Mammary epithelial cell (primary cell): ENCODE measurements at regions of chr10 and their contacts with region 1.

Region 1: GRCh38 chr10:36634916-36635315 is 490.5 kb upstream of the ANKRD30A start:
- DNase-seq: no peak
- H3K4me3 ChIP-seq: no peak overlapping the region
- H3K27ac ChIP-seq: no peak overlapping the region
- H3K4me1 ChIP-seq: no peaks in the 10 kb centered on the region
- H3K27me3 ChIP-seq: no peaks in the 10 kb centered on the region
- CTCF ChIP-seq: no peak

Region 2: DNA sequence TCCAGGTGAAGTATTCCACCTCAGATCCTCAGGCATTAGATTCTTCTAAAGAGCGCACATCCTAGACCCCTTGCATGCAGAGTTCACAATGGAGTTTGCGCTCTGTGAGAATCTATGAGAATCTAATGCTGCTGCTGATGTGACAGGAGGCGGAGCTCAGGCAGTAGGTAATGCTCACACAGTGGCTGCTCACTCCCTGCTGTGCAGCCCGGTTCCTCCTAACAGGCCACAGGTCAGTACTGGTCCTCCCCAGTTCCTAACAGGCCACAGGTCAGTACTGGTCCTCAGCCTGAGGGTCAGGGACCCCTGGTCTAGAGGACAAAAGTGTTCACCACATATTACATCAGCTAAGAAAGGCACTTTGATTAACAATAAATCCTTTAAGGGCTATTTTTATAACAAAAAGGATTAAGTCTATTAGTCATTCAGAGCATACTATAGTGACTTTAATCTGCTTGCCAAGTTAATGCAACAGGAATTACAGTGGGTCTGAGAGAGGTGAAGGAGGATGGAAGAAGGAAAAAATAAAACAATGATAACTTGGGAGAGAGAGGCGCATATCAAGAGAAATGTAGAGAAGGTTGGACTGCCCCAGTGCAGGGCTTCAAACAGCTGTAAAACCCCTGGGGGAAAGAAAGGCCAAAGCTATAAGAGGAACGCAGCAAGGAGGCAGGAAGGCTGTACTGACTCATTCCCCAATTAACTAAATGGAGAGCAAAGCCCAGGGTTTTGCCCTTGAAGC is 1594.0 kb before region 1 on chr10:
- CTCF ChIA-PET with region 1: interaction called, 12 read pairs
- dilution Hi-C with region 1: no loop called
- in situ Hi-C with region 1: no loop called
- intact Hi-C with region 1: no loop called
- DNase-seq: peak; percentile 46
- H3K4me3 ChIP-seq: no peak overlapping the region
- H3K27ac ChIP-seq: peak overlapping the region; percentile 5
- H3K4me1 ChIP-seq: peaks cover 20% of the 10 kb centered on the region
- H3K27me3 ChIP-seq: no peaks in the 10 kb centered on the region
- CTCF ChIP-seq: no peak

Region 3: DNA sequence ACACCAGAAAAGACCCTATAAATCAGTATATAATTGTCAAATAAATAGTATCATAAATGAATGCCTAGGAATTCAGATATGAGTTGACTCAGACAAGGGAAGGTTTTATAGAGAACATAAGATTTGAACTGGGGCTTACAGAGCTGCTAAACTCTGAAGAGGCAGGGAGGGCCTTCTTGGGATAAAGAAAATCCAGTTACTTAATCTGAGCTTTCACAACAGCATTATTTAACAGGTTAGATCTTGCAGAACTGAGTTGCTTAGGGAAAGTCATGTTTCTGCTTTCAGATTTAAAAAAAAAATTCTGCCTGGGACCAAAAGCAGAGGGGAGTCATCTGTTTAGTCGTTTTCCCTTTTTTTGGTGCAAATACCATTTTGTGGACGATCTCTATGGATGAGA is 398.0 kb before region 1 on chr10:
- CTCF ChIA-PET with region 1: no interaction called
- dilution Hi-C with region 1: no loop called
- in situ Hi-C with region 1: no loop called
- intact Hi-C with region 1: no loop called
- DNase-seq: peak; percentile 28
- H3K4me3 ChIP-seq: no peak overlapping the region
- H3K27ac ChIP-seq: no peak overlapping the region
- H3K4me1 ChIP-seq: no peaks in the 10 kb centered on the region
- H3K27me3 ChIP-seq: no peaks in the 10 kb centered on the region
- CTCF ChIP-seq: no peak

Region 4: DNA sequence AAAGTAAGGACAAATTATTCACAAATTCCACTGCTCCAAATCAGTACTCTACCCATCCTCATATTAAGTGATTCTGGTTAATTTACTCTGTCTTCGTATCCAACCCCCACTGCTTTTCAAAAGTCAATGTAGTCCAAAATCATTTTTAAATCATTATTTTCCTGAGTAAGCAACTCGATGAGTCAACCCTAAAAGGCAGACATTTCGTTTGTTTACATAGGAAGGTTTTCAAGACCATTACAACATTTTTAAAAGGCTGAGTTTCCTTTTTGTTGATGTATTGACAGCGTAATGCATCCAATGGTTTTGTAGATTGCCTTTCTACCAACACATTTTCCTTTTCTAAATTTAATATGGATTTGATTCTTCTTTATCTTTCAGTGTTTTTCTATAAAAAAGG is 32.5 kb before region 1 on chr10:
- CTCF ChIA-PET with region 1: no interaction called
- dilution Hi-C with region 1: no loop called
- in situ Hi-C with region 1: no loop called
- intact Hi-C with region 1: no loop called
- DNase-seq: peak; percentile 9
- H3K4me3 ChIP-seq: no peak overlapping the region
- H3K27ac ChIP-seq: no peak overlapping the region
- H3K4me1 ChIP-seq: no peaks in the 10 kb centered on the region
- H3K27me3 ChIP-seq: no peaks in the 10 kb centered on the region
- CTCF ChIP-seq: no peak

Region 5: DNA sequence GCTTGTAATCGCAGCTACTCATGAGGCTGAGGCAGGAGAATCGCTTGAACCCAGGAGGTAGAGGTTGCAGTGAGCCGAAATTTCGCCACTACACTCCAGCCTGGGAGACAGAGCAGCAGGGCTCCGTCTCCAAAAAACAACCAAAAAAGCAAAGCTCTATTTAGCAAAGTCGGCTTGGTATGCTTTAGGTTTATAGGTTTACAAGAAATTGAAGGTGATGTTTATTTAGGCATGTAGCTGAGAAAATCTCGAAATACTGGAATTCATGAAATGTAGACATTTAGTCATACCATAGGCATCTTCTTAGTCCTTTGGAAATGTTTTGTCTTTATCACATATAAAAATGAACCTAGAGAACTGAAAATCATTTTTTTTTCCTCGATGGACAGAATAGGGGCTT is 36.7 kb after region 1 on chr10:
- CTCF ChIA-PET with region 1: no interaction called
- dilution Hi-C with region 1: no loop called
- in situ Hi-C with region 1: no loop called
- intact Hi-C with region 1: no loop called
- DNase-seq: no peak
- H3K4me3 ChIP-seq: no peak overlapping the region
- H3K27ac ChIP-seq: no peak overlapping the region
- H3K4me1 ChIP-seq: peaks cover 5% of the 10 kb centered on the region
- H3K27me3 ChIP-seq: no peaks in the 10 kb centered on the region
- CTCF ChIP-seq: no peak